Esophagus squamous epithelium (tissue), 5 donors: ENCODE measurements at regions of chr5 and their contacts with region 1.

Region 1: DNA sequence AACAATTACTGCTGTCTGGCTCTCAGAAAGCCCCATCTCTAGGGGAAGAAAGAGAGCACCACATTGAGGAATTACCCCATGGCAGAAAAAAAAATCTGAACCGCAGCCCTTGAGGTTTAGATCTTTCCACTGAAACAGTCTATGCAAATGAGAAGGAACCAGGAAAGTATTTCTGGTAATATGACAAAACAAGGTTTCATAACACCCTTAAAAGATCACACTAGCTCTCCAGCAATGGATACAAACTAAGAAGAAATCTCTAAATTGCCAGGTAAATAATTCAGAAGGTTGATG is 427.1 kb downstream of the PRELID2 start:
- DNase-seq: no peak
- H3K4me3 ChIP-seq: no peak overlapping the region
- H3K27ac ChIP-seq: no peak overlapping the region
- H3K4me1 ChIP-seq: no peaks in the 10 kb centered on the region
- H3K27me3 ChIP-seq: no peaks in the 10 kb centered on the region
- CTCF ChIP-seq: no peak
- POLR2A ChIP-seq: no peak

Region 2: GRCh38 chr5:145378226-145378625 is 29.8 kb before region 1 on chr5:
- intact Hi-C with region 1: loop called (anchors 2 kb)
- DNase-seq: no peak
- H3K4me3 ChIP-seq: no peak overlapping the region
- H3K27ac ChIP-seq: no peak overlapping the region
- H3K4me1 ChIP-seq: no peaks in the 10 kb centered on the region
- H3K27me3 ChIP-seq: no peaks in the 10 kb centered on the region
- CTCF ChIP-seq: no peak
- POLR2A ChIP-seq: no peak

Region 3: GRCh38 chr5:145463635-145464034 is 55.6 kb after region 1 on chr5:
- intact Hi-C with region 1: no loop called
- DNase-seq: no peak
- H3K4me3 ChIP-seq: no peak overlapping the region
- H3K27ac ChIP-seq: no peak overlapping the region
- H3K4me1 ChIP-seq: no peaks in the 10 kb centered on the region
- H3K27me3 ChIP-seq: no peaks in the 10 kb centered on the region
- CTCF ChIP-seq: no peak
- POLR2A ChIP-seq: no peak